ENCODE measurements at regions of chr11 and their contacts with region 1.

Region 1: GRCh38 chr11:64742889-64743590 is 902 bp downstream of the RASGRP2 start:
- DNase-seq: peak; percentile 80
- ATAC-seq: peak; percentile 25
- H3K4me3 Mint-ChIP-seq: peak overlapping the region; percentile 83
- H3K27ac Mint-ChIP-seq: no peak overlapping the region
- H3K4me1 Mint-ChIP-seq: peaks cover 26% of the 10 kb centered on the region
- H3K27me3 Mint-ChIP-seq: no peaks in the 10 kb centered on the region

Region 2: DNA sequence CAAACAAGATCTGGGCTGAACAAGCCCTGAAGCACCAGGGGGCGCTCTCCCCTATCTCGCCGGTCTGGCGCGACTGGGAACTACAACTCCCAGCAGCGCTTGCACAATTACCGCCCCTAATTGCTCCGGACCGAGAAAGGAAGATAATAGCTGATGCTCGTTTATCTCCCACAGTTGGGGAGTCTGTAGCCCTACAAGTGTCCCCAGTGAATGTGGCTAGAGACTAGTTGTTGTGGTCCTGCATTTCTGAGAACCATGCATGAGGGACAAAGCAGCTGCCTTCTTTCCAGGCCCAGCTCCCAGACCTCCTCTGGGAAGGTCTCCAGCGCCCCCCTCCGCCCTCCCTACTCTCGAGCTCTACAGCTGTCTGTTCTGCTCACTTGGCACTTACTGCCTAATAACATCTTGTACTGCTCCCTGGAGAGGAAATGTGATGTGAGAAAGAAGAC is 54.5 kb before region 1 on chr11:
- CTCF ChIA-PET with region 1: interaction called, 40 read pairs
- DNase-seq: peak; percentile 93
- ATAC-seq: peak; percentile 98
- H3K4me3 Mint-ChIP-seq: peak overlapping the region; percentile 45
- H3K27ac Mint-ChIP-seq: no peak overlapping the region
- H3K4me1 Mint-ChIP-seq: peaks cover 23% of the 10 kb centered on the region
- H3K27me3 Mint-ChIP-seq: peaks cover 31% of the 10 kb centered on the region

Region 3: GRCh38 chr11:64767344-64768299 is 24.6 kb after region 1 on chr11:
- CTCF ChIA-PET with region 1: interaction called, 294 read pairs
- DNase-seq: peak; percentile 90
- ATAC-seq: peak; percentile 37
- H3K4me3 Mint-ChIP-seq: no peak overlapping the region
- H3K27ac Mint-ChIP-seq: peak overlapping the region; percentile 79
- H3K4me1 Mint-ChIP-seq: peaks cover 82% of the 10 kb centered on the region
- H3K27me3 Mint-ChIP-seq: no peaks in the 10 kb centered on the region

Region 4: GRCh38 chr11:64778508-64779346 is 35.7 kb after region 1 on chr11 and contains the start of gene SF1:
- CTCF ChIA-PET with region 1: interaction called, 66 read pairs
- DNase-seq: peak; percentile 100
- ATAC-seq: peak; percentile 88
- H3K4me3 Mint-ChIP-seq: peak within 1 kb of the TSS; percentile 97
- H3K27ac Mint-ChIP-seq: peak within 1 kb of the TSS; percentile 98
- H3K4me1 Mint-ChIP-seq: peaks cover 55% of the 10 kb centered on the region
- H3K27me3 Mint-ChIP-seq: peaks cover 3% of the 10 kb centered on the region
- total RNA-seq, gene SF1: 442 to 462 TPM

Region 5: GRCh38 chr11:64787526-64788320 is 44.7 kb after region 1 on chr11:
- CTCF ChIA-PET with region 1: interaction called, 10 read pairs
- DNase-seq: peak; percentile 65
- ATAC-seq: peak; percentile 63
- H3K4me3 Mint-ChIP-seq: no peak overlapping the region
- H3K27ac Mint-ChIP-seq: peak overlapping the region; percentile 28
- H3K4me1 Mint-ChIP-seq: no peaks in the 10 kb centered on the region
- H3K27me3 Mint-ChIP-seq: no peaks in the 10 kb centered on the region

Measured in activated CD8-positive, alpha-beta memory T cell treated with anti-CD3 and anti-CD28 coated beads, Interleukin-2, amount 10 ng/mL, durations not matched to agents 7 days and 5 days (primary cell).